Psoas muscle (tissue), 8 donors: ENCODE measurements at regions of chr3 and their contacts with region 1.

Region 1: GRCh38 chr3:15287565-15288330 is 44.6 kb downstream of the SH3BP5 start:
- DNase-seq: peak; percentile 72 to 82
- ATAC-seq: peak; percentile 60 to 93 (median 92)
- H3K4me3 ChIP-seq: no peak overlapping the region
- H3K27ac ChIP-seq: peak overlapping the region; percentile 27
- H3K4me1 ChIP-seq: peaks cover 22% of the 10 kb centered on the region
- H3K27me3 ChIP-seq: no peaks in the 10 kb centered on the region
- CTCF ChIP-seq: no peak

Region 2: GRCh38 chr3:14803101-14803980 is 484.4 kb before region 1 on chr3:
- intact Hi-C with region 1: loop called in 1 of 2 experiments (anchors 5 kb)
- DNase-seq: peak in 1 of 2 donors; percentile 60
- ATAC-seq: peak in 3 of 4 donors; percentile 42 to 59 (median 49)
- H3K4me3 ChIP-seq: no peak overlapping the region
- H3K27ac ChIP-seq: peak overlapping the region; percentile 23
- H3K4me1 ChIP-seq: peaks cover 5% of the 10 kb centered on the region
- H3K27me3 ChIP-seq: peaks cover 0 to 23% (median 0%) of the 10 kb centered on the region in 3 donors
- CTCF ChIP-seq: no peak